SK-N-SH (cell line): ENCODE measurements at regions of chr4 and their contacts with region 1.

Region 1: GRCh38 chr4:8886612-8887406 is 15.2 kb upstream of the HMX1 start:
- DNase-seq: no peak
- H3K4me3 ChIP-seq: no peak overlapping the region
- H3K27ac ChIP-seq: no peak overlapping the region
- H3K4me1 ChIP-seq: no peaks in the 10 kb centered on the region
- H3K27me3 ChIP-seq: no peaks in the 10 kb centered on the region
- CTCF ChIP-seq: peak; percentile 20; the same call in 1 of the 2 replicates
- EP300 ChIP-seq: no peak
- RAD21 ChIP-seq: no peak

Region 2: GRCh38 chr4:8840006-8840793 is 46.6 kb before region 1 on chr4:
- CTCF ChIA-PET with region 1: no interaction called
- POLR2A ChIA-PET with region 1: no interaction called
- DNase-seq: peak; percentile 23
- H3K4me3 ChIP-seq: no peak overlapping the region
- H3K27ac ChIP-seq: no peak overlapping the region
- H3K4me1 ChIP-seq: peaks cover 0 to 6% of the 10 kb centered on the region in 2 experiments; a peak in 1 of 4 replicates
- H3K27me3 ChIP-seq: no peaks in the 10 kb centered on the region
- CTCF ChIP-seq: no peak
- EP300 ChIP-seq: no peak
- RAD21 ChIP-seq: no peak

Region 3: DNA sequence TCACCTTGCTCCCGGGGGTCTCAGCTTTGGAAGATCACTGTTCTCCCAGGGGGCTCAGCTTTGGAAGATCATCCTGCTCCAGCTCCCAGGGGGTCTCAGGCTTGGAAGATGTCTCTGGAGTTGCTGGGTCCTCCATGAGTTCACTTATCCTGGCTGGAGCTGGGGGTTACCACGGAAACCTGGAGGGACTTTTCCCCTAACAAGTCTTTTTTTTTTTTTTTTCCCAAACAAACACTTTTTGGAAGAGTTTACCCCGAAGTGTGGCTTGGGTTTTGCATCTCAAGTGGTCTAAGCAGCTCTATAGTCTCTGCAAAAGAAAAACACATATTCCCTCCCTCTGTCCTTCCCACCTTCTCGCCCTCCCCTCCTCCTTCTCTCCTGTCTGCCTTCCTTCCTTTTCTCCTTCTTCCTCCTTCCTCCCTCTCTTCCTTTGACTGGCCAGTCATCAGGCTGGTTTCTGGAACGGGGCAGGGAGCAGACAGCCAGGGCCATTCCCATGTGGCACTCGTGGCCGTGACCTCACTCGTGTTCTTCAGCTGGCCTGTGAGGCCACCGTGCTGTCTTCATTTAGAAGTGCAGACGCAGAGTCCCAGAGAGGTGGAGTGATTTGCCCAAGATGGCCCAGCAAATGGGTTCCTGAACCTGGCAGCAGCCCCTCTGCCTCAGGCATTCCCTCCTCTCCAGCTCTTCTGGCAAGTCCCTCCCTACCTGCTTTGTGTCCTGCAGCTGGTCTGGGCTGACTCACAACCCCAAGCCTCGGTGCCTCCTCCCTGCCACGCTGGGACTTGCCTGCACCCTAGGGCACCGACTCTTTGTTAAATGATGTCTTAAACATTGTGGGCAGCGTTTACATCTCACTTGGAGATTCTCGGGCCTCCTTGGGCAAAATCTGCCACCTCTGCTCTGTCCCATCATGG is 10.7 kb after region 1 on chr4:
- CTCF ChIA-PET with region 1: interaction called, 21 read pairs
- POLR2A ChIA-PET with region 1: no interaction called
- DNase-seq: no peak
- H3K4me3 ChIP-seq: no peak overlapping the region
- H3K27ac ChIP-seq: no peak overlapping the region
- H3K4me1 ChIP-seq: no peaks in the 10 kb centered on the region
- H3K27me3 ChIP-seq: no peaks in the 10 kb centered on the region
- CTCF ChIP-seq: no peak
- EP300 ChIP-seq: no peak
- RAD21 ChIP-seq: no peak